ENCODE measurements at regions of chr6 and their contacts with region 1.

Region 1: DNA sequence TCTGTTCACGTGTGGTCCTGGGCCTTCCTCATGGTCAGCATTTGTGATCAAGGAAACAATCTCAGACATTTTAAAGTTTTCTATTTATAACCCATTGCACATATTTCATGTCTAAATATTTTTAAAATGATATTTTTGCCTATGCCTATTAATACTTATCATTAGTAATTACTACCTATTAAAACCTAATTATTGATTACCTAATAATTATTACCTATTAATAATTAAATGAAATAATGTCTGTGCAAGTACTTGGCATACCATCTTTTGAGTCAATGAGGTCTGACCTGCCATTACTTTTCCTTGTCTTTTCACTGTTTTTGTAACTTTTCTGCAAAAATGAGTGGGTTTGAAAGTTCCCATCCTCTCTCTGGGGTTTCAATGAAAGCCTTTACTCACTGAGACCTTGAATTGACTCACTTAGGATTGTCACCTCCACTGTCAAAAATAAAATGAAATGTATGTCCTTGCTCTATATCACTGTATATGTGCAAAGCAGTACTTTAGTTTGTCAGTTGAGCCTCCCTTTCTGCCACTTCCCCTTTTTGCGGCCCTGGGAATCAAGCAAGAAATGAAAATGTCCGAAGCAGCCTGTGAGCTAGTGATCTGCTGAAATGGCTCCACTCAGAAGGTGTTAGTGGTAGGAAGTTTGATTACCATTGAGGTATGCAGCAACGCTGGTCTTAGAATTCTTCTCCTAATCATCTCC is 87.8 kb downstream of the L3MBTL3 start:
- DNase-seq: no peak
- ATAC-seq: peak; percentile 90
- H3K4me3 Mint-ChIP-seq: peak overlapping the region; percentile 36
- H3K27ac Mint-ChIP-seq: peak overlapping the region; percentile 91
- H3K4me1 Mint-ChIP-seq: peaks cover 45% of the 10 kb centered on the region
- H3K27me3 Mint-ChIP-seq: no peaks in the 10 kb centered on the region
- CTCF ChIP-seq: no peak

Region 2: DNA sequence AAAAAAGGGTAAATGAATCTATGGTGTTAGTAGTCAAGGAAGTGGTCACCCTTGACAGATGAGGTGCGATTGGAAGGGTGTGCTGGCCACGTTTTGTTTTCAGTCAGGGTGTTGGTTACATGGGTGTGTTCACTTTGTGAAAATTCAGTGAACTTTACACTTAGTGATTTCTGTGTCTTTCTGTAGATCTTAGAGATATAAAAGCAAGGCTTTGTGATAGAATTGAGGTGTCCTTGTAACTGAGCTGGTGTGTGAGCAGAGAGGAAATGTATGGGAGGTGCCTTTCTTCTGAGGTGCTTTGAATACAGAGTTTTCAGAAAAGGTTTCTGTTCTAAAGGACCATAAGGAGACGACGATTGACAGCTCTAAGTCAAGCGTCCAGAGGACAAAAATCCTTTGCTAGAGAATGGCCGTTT is 26.1 kb after region 1 on chr6:
- CTCF ChIA-PET with region 1: no interaction called
- POLR2A ChIA-PET with region 1: no interaction called
- intact Hi-C with region 1: loop called (anchors 2 kb)
- DNase-seq: no peak
- ATAC-seq: peak; percentile 75
- H3K4me3 Mint-ChIP-seq: peak overlapping the region; percentile 70
- H3K27ac Mint-ChIP-seq: peak overlapping the region; percentile 96
- H3K4me1 Mint-ChIP-seq: peaks cover 50% of the 10 kb centered on the region
- H3K27me3 Mint-ChIP-seq: no peaks in the 10 kb centered on the region
- CTCF ChIP-seq: no peak

Region 3: GRCh38 chr6:130148181-130148580 is 42.0 kb after region 1 on chr6:
- CTCF ChIA-PET with region 1: no interaction called
- POLR2A ChIA-PET with region 1: no interaction called
- intact Hi-C with region 1: loop called (anchors 5 kb)
- DNase-seq: no peak
- ATAC-seq: peak; percentile 45
- H3K4me3 Mint-ChIP-seq: no peak overlapping the region
- H3K27ac Mint-ChIP-seq: no peak overlapping the region
- H3K4me1 Mint-ChIP-seq: no peaks in the 10 kb centered on the region
- H3K27me3 Mint-ChIP-seq: no peaks in the 10 kb centered on the region
- CTCF ChIP-seq: no peak

Measured in activated B cell treated with CpG ODN at 0.5 μM for 24 hours (primary cell).